Cardiac septum (tissue), 1 donor: ENCODE measurements at regions of chr17 and their contacts with region 1.

Region 1: GRCh38 chr17:50200457-50201275 is 765 bp downstream of the COL1A1 start:
- DNase-seq: peak; percentile 94

Region 2: GRCh38 chr17:49013311-49014213 is 1187.1 kb before region 1 on chr17:
- intact Hi-C with region 1: no loop called
- DNase-seq: no peak

Region 3: GRCh38 chr17:50169121-50169764 is 31.4 kb before region 1 on chr17:
- intact Hi-C with region 1: loop called (anchors 2 kb)
- DNase-seq: no peak

Region 4: DNA sequence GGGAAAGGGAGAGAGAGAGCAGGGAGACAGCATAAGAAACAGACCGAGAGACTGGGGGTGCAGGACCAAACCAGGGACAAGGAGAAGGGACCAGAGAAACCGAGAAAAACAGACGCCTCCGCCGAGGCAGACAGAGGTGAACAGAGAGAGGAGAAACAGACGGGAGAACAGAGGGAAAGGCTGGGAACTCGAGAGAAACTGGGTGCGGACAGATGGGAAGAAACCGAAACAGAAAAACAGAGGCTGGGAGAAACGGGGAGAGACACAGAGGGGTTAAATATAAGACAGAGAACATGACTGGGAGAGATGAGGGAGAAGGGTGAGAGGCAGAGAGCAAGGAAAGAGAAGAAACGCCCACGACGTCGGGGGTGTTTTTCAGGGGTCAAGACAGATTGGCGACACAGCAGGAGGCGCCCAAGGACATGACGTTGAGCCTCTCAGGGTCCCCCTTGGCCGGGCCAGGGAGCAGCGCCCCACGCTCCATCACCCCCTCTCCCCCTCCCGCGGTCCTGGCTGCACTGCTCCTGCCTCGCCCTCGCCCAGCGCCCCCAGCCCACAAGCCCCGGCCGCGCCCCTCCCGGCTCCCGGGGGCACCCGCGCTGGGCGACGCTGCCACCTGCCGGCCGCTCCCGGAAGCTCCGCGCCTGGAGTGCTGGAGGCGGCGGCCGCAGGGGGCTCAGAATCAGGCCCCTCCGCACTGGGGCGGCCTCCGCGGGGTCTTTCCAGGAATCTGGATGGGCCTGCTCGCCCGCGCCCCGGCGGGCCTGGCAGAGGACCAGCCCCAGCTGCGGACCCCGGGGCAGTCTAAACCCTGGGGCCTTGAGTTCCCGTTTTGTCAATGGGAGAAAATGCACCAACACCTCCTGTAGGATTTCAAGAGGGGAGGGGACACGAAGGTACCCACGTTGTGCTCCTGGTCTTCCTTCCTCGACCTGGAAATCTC is 72.3 kb after region 1 on chr17:
- intact Hi-C with region 1: loop called (anchors 1 kb)
- DNase-seq: peak; percentile 85

Region 5: GRCh38 chr17:50297407-50297865 is 96.8 kb after region 1 on chr17:
- intact Hi-C with region 1: loop called (anchors 1 kb)
- DNase-seq: peak; percentile 89